A549 (cell line): ENCODE measurements at regions of chr15 and their contacts with region 1.

Region 1: GRCh38 chr15:69265347-69265955 is 33.3 kb upstream of the PAQR5 start:
- DNase-seq: peak; percentile 36 to 58
- ATAC-seq: peak in 1 of 2 experiments; percentile 59; a peak in 2 of 6 replicates
- H3K4me3 ChIP-seq: no peak overlapping the region
- H3K27ac ChIP-seq: no peak overlapping the region
- H3K4me1 ChIP-seq: no peaks in the 10 kb centered on the region
- CTCF ChIP-seq: peak; percentile 91
- EP300 ChIP-seq: no peak
- POLR2A ChIP-seq: no peak
- RAD21 ChIP-seq: peak; percentile 82 to 83

Region 2: DNA sequence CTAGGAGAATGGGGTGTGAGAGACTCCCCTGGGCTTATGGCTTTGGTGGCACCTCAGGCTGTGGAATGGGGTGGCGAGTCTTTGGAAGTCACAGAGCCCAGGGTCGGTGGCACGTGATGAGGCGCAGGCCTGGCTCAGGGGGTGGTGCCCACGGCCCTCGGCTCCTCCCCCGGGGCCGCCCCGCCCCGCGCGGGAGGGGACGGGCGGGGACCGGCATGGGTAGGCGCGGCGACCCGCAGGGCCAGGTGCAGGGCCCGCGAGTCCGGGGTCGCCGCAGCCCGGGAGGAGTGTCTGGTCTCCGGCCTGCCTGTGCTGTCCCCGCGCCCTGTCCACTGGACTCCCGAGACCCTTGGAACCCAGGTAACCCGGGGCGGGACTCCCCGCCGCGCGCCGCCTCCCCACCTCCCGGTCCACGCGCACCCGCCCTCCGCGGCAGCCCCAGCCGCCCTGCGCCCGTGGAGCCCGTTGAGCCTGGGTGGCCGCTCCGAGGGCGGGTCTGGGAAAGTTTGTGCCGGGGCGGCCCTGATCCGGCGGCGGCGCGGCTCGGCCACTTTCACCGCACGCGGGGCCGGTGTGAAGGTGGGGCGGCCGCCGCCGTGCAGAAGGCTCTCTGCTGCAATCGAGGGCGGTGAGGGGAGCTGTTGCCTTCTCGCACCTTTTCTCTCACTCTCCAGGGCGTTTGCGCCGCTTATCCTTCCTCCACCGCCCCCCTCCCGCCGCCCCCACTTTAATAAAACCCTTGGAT is 33.4 kb after region 1 on chr15 and contains the start of gene PAQR5:
- CTCF ChIA-PET with region 1: interaction called, 10 read pairs
- POLR2A ChIA-PET with region 1: no interaction called
- DNase-seq: peak; percentile 63 to 92
- ATAC-seq: peak; percentile 77 to 84
- H3K4me3 ChIP-seq: peak within 1 kb of the TSS; percentile 95
- H3K27ac ChIP-seq: peak within 1 kb of the TSS; percentile 94 to 96
- H3K4me1 ChIP-seq: peaks cover 39% of the 10 kb centered on the region
- CTCF ChIP-seq: no peak
- EP300 ChIP-seq: no peak
- POLR2A ChIP-seq: peak; percentile 64
- RAD21 ChIP-seq: no peak; a peak in 1 of 5 replicates
- polyA plus RNA-seq, gene PAQR5: 114 and 158 TPM in 2 replicates